Dorsolateral prefrontal cortex (tissue), 120 donors: ENCODE measurements at regions of chr2 and their contacts with region 1.

Region 1: DNA sequence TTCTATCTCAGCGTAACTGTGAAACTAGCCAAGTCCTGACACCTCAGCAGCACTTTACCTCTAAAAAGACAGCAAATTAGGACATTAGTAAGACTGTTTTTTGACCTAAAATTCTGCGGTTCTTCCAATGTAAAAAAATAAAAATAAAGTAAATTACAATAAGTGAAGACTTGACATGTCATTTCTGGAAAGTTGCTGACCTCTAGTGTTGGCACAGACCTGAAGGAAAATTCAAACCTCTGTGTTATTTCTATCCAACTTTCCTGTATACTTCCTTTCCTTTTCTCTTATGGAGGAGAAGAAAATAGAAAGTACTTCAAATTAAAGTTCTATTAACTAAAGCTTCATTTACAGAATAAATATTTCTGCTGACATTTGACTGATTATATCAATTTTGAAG is 110.6 kb downstream of the TMEM182 start:
- DNase-seq: no peak
- H3K4me3 ChIP-seq: no peak overlapping the region
- H3K27ac ChIP-seq: no peak overlapping the region
- H3K27me3 ChIP-seq: no peaks in the 10 kb centered on the region
- CTCF ChIP-seq: peak in 49 of 56 donors; percentile 11 to 69 (median 38)

Region 2: DNA sequence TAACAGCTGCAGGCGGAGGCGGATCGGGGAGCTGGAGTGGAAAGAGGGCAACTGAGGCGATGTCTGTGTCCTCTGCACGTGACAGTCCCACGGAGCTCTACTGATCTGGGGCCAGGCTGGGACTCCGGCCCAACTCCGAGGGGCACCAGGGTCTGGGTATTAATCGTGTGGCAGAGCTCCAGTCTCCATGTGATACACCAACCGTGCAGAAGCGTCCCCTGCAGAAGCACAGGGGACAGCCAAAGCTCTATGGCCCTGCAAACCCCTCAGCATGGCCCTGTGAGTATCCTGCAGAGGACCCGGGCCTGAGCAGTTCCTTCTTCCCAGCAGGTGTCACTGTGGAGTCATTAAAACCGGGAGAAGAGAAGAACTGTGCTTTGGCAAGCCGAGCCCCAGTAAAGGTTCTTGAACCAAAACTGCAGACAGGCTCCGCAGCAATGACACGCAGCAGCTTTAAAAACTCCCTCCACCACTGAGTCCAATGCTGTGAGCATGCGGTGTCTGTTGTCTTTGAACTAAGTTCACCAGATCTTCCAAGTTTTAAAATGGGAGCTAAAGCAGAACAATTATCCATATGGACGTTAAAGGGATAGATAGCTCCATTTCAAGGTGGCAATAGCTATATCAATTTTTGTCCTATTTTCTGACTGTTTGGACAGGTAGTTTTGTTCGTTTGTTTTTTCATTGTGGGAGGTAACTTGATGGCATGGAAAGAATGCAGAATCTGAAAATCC is 31.1 kb before region 1 on chr2:
- intact Hi-C with region 1: loop called in 1 of 2 experiments (anchors 2 kb)
- DNase-seq: peak in 9 of 10 donors; percentile 53 to 73 (median 63)
- H3K4me3 ChIP-seq: peak overlapping the region in 26 of 59 donors; percentile 6 to 43 (median 26)
- H3K27ac ChIP-seq: peak overlapping the region in 14 of 59 donors; percentile 4 to 65 (median 35)
- H3K27me3 ChIP-seq: no peaks in the 10 kb centered on the region
- CTCF ChIP-seq: peak; percentile 28 to 85 (median 72)